ENCODE measurements at regions of chr3 and their contacts with region 1.

Region 1: GRCh38 chr3:38651154-38651789 is 1.8 kb upstream of the SCN5A start:
- DNase-seq: peak; percentile 71
- ATAC-seq: peak; percentile 72
- H3K4me3 ChIP-seq: no peak overlapping the region
- H3K27ac ChIP-seq: no peak overlapping the region
- H3K4me1 ChIP-seq: no peaks in the 10 kb centered on the region
- H3K27me3 ChIP-seq: peaks cover 2% of the 10 kb centered on the region; the same call in 1 of the 2 replicates
- CTCF ChIP-seq: peak; percentile 89

Region 2: DNA sequence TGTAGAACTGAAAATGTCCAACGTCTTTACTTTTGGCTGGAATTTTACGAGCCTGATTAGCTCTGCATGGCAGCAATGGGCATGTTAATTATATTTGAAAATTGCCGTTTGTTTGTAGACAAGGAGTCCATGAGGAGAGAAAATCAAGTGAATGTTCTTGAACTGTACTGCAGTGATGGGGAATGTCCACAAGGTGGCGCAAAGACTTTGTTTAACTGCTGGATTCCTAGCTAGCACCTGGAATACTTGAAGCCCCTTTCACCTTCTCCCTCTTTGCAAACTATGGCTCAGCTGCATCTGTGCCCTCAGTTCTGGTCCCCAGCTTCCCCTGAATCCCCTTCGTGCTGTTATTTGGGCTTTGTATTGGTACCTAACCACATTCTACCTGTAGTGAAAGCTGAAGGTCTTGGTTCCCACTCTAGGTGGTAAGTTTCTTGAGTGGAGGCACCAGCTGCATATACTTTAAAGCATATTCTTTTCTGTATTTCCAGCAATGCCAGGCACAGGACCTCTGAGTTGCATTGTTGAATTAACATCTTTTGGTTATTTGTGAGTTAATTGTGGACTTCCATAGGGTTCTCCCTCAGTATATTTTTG is 129.8 kb before region 1 on chr3:
- CTCF ChIA-PET with region 1: interaction called, 6 read pairs
- POLR2A ChIA-PET with region 1: no interaction called
- in situ Hi-C with region 1: loop called (anchors 25 kb)
- intact Hi-C with region 1: loop called (anchors 2 kb)
- DNase-seq: peak; percentile 54
- ATAC-seq: peak; percentile 60; the same call in 1 of the 2 replicates
- H3K4me3 ChIP-seq: no peak overlapping the region
- H3K27ac ChIP-seq: no peak overlapping the region
- H3K4me1 ChIP-seq: no peaks in the 10 kb centered on the region
- H3K27me3 ChIP-seq: no peaks in the 10 kb centered on the region
- CTCF ChIP-seq: peak; percentile 81